ENCODE measurements at regions of chr17 and their contacts with region 1.

Region 1: GRCh38 chr17:76737082-76737675 is at the start of gene SRSF2:
- DNase-seq: peak; percentile 98 to 100 (median 99)
- H3K4me3 ChIP-seq: peak within 1 kb of the TSS; percentile 94
- H3K4me3 Mint-ChIP-seq: peak within 1 kb of the TSS; percentile 85 to 98 (median 97)
- H3K27ac ChIP-seq: peak within 1 kb of the TSS; percentile 95
- H3K27ac Mint-ChIP-seq: peak within 1 kb of the TSS; percentile 99 to 100 (median 99)
- H3K4me1 ChIP-seq: peaks cover 61% of the 10 kb centered on the region
- H3K4me1 Mint-ChIP-seq: peaks cover 56 to 75% (median 72%) of the 10 kb centered on the region in 3 donors
- H3K27me3 ChIP-seq: no peaks in the 10 kb centered on the region
- H3K27me3 Mint-ChIP-seq: no peaks in the 10 kb centered on the region
- total RNA-seq, gene SRSF2: 626 to 630 TPM

Region 2: DNA sequence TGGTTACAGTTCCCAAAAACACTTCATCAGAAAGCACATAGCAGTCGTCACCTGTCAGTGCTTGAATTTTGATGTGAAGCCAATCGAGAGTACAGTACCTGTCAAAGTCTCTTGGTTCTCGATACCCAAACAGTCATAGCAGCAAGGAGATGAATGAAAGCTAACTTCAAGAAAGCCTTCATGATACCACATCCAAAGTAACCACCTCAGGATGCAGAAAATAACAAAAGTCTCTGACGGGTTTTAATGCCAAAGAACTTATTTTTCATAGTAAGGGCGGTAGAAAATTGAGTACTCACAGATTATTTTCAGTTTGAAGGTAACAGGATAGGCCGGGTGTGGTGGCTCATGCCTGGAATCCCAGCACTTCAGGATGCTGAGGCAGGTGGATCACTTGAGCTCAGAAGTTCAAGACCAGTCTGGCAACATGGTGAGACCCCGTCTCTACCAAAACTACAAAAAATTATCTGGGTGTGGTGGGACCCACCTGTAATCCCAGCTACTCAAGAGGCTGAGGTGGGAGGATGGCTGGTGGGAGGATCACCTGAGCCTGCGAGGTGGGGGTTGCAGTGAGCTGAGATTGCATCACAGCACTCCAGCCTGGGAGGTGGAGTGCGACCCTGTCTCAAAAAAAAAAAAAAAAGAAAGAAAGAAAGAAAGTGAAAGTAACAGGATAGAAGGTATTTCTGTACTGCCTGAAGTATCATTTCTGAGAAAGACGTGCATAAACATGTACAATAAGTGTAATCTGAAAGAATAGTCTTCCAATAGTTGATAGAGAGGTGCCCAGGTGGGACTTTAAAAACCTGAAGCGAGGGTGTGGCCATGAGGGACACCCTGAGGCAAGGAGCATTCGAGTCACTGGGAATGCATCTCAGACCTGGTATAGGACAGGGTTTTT is 16.1 kb after region 1 on chr17:
- CTCF ChIA-PET with region 1: interaction called, 4 read pairs
- POLR2A ChIA-PET with region 1: interaction called, 31 read pairs
- DNase-seq: peak in 3 of 5 donors; percentile 60 to 87 (median 61)
- H3K4me3 ChIP-seq: peak overlapping the region; percentile 47
- H3K4me3 Mint-ChIP-seq: peak overlapping the region; percentile 81 to 95 (median 89)
- H3K27ac ChIP-seq: peak overlapping the region; percentile 67
- H3K27ac Mint-ChIP-seq: peak overlapping the region; percentile 72 to 98 (median 96)
- H3K4me1 ChIP-seq: peaks cover 27% of the 10 kb centered on the region
- H3K4me1 Mint-ChIP-seq: peaks cover 26 to 35% (median 28%) of the 10 kb centered on the region in 3 donors
- H3K27me3 ChIP-seq: no peaks in the 10 kb centered on the region
- H3K27me3 Mint-ChIP-seq: no peaks in the 10 kb centered on the region

Region 3: DNA sequence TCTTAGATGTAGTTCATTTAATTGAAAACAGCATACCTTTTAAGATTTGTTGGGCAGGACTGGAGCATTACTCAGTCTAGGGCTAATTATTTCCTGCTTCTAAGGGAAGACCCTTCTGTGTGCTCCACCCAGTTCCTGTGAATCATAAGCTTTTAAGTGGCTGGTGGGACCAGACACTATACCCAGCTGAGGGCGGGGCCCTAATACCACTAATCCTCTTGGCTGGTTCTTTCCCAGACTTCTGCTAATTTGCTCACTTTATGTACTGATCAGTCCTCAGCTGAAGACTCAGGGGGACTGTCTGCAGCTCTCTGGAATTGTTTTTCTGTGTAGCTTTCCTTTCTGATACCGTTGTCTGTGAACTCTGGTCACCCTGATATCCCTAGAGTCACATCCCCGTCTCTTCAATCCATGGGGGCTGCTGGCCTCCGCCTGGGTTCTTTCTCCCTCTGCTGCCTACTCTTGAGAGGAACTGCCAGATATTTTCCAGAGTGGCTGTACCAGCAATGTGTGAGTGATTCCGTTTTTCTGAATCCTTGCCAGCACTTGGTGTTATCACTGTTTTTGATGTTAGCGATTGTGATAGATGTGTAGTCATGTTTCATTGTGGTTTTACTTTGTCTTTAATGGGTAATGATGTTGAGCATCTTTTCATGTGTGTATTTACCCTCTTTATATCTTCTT is 35.8 kb after region 1 on chr17:
- CTCF ChIA-PET with region 1: interaction called, 3 read pairs
- POLR2A ChIA-PET with region 1: interaction called, 11 read pairs
- DNase-seq: peak; percentile 38 to 78 (median 61)
- H3K4me3 ChIP-seq: peak overlapping the region; percentile 26
- H3K4me3 Mint-ChIP-seq: peak overlapping the region; percentile 60 to 89 (median 85)
- H3K27ac ChIP-seq: peak overlapping the region; percentile 61
- H3K27ac Mint-ChIP-seq: peak overlapping the region; percentile 92 to 99 (median 98)
- H3K4me1 ChIP-seq: peaks cover 13% of the 10 kb centered on the region
- H3K4me1 Mint-ChIP-seq: peaks cover 23 to 35% (median 26%) of the 10 kb centered on the region in 3 donors
- H3K27me3 ChIP-seq: no peaks in the 10 kb centered on the region
- H3K27me3 Mint-ChIP-seq: no peaks in the 10 kb centered on the region